RWPE1 (cell line): ENCODE measurements at regions of chr9 and their contacts with region 1.

Region 1: GRCh38 chr9:137034863-137035761 is 3.2 kb upstream of the FUT7 start:
- DNase-seq: peak; percentile 91
- H3K27ac ChIP-seq: peak overlapping the region; percentile 66
- CTCF ChIP-seq: peak; percentile 100

Region 2: DNA sequence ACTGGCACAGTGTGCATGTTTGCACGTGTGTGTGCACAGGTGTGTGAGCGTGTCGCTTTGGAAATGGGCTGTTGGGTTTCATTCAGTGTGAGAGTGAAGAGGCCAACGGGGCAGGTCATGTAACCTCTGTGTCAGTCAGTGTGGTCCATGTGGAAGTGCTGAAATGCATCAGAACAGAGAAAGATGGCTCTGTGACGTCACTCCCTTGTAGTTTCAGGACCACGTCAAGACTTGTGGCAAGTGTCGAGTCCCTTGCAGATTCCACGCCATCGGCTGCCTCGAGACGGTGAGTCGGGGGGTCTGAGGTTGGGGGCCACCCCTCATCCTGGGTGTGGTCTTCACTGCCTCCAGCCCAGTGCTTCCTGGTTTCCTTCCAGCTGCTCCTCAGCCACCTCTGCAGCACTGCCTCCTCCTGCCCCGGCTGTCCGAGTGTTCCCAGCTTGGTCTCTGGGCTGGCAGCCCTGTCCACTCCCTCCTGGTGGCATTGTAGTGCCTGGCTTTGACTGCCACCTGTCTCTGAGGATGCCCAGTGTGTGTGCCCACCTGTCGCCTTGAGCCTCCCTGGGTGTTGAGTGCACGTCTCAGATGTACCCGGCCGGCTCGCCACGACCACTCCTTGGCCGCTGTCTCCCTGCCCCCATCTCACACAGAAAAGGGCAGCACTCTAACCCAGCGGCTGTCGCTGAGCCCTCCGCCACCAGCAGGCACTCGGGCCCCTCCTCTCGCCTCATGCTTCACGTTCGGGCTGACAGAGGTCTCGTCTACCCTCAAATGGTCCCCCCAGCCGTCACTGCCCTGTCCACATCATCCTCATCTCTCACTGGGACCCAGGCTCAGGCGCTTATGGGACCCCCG is 118.6 kb before region 1 on chr9:
- CTCF ChIA-PET with region 1: no interaction called
- POLR2A ChIA-PET with region 1: no interaction called
- DNase-seq: no peak
- H3K27ac ChIP-seq: peak overlapping the region; percentile 19
- CTCF ChIP-seq: no peak

Region 3: DNA sequence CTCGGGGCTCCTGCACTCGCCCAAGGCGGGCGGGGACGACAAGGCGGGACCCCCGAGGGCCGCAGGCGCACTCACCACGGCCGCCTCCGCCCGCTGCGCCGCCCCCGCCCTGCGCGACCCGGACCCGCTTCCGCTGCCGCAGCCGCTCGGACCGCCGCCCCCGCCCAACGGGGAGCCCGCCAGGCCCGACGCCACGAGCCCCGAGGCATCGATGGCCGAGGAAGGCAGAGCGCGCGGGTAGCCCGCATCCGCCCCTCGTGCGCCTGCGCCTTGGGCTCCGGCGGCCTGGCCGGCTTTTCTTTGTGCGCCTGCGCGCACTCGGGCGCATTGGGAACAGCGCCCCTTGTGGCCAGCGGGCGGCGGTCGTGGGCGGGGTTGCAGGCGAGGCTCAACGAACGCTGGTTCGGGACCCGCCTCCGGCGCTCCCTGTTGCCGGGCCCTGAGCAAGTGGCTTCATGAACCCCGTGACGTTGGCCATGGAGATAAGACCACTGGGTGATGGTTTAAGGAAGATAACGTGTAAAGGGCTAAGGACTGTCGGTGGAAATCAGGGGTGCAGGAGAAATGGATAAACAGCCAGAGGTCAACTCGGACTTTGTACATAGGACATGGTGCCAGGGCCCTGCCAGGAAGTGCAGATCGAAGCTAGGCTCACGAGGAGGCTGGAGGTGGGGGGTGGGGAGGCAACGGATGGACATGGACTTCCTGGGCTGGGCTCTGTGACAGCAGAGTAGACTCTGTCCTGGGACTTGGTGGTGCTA is 90.4 kb before region 1 on chr9 and contains the starts of genes C8G and FBXW5:
- CTCF ChIA-PET with region 1: interaction called, 97 read pairs
- POLR2A ChIA-PET with region 1: interaction called, 9 read pairs
- DNase-seq: peak; percentile 100
- H3K27ac ChIP-seq: peak within 1 kb of the TSS; percentile 89
- CTCF ChIP-seq: peak; percentile 100

Region 4: GRCh38 chr9:137021979-137022619 is 13.0 kb before region 1 on chr9:
- CTCF ChIA-PET with region 1: interaction called, 44 read pairs
- POLR2A ChIA-PET with region 1: no interaction called
- DNase-seq: peak; percentile 95
- H3K27ac ChIP-seq: peak overlapping the region; percentile 81
- CTCF ChIP-seq: no peak

Region 5: GRCh38 chr9:137064027-137064879 is 29.1 kb after region 1 on chr9:
- CTCF ChIA-PET with region 1: interaction called, 31 read pairs
- POLR2A ChIA-PET with region 1: no interaction called
- DNase-seq: peak; percentile 71
- H3K27ac ChIP-seq: peak overlapping the region; percentile 85
- CTCF ChIP-seq: peak; percentile 100